Ascending aorta (tissue), 2 donors: ENCODE measurements at regions of chr21 and their contacts with region 1.

Region 1: GRCh38 chr21:45554477-45555175 is 12.4 kb upstream of the SLC19A1 start:
- DNase-seq: peak in 1 of 2 donors; percentile 89
- H3K4me3 ChIP-seq: peak overlapping the region; percentile 66 to 77
- H3K27ac ChIP-seq: peak overlapping the region; percentile 55 to 73
- H3K4me1 ChIP-seq: no peaks in the 10 kb centered on the region
- H3K27me3 ChIP-seq: no peaks in the 10 kb centered on the region
- CTCF ChIP-seq: peak; percentile 83 to 87 (median 84)

Region 2: DNA sequence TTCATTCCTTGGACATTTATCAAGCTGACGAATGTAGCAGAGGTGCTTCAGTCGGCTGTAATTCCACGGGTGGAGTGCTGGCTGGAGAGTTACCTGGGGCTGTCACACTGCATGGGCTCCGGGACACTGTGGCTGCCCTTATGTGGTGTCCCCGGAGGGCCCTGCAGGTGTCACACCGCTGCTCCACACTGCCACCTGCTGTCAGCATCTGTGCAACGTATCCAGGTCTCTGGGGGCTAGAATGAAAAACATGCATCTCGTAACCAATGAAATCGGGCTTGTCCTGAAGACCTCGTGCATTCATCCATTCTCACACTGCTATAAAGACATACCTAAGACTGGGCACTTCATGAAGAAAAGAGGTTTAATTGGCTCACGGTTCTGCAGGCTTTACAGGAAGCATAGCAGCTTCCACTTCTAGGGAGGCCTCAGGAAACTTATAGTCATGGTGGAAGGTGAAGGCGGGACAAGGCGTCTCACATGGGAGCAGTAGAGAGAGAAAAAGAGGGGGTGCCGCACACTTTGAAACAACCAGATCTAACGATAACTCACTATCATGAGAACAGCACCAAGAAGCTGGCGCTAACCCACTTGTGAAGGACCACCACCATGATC is 42.2 kb after region 1 on chr21:
- intact Hi-C with region 1: loop called (anchors 1 kb)
- DNase-seq: peak in 1 of 2 donors; percentile 76
- H3K4me3 ChIP-seq: no peak overlapping the region
- H3K27ac ChIP-seq: no peak overlapping the region
- H3K4me1 ChIP-seq: no peaks in the 10 kb centered on the region
- H3K27me3 ChIP-seq: no peaks in the 10 kb centered on the region
- CTCF ChIP-seq: peak; percentile 64 to 67 (median 66)

Region 3: DNA sequence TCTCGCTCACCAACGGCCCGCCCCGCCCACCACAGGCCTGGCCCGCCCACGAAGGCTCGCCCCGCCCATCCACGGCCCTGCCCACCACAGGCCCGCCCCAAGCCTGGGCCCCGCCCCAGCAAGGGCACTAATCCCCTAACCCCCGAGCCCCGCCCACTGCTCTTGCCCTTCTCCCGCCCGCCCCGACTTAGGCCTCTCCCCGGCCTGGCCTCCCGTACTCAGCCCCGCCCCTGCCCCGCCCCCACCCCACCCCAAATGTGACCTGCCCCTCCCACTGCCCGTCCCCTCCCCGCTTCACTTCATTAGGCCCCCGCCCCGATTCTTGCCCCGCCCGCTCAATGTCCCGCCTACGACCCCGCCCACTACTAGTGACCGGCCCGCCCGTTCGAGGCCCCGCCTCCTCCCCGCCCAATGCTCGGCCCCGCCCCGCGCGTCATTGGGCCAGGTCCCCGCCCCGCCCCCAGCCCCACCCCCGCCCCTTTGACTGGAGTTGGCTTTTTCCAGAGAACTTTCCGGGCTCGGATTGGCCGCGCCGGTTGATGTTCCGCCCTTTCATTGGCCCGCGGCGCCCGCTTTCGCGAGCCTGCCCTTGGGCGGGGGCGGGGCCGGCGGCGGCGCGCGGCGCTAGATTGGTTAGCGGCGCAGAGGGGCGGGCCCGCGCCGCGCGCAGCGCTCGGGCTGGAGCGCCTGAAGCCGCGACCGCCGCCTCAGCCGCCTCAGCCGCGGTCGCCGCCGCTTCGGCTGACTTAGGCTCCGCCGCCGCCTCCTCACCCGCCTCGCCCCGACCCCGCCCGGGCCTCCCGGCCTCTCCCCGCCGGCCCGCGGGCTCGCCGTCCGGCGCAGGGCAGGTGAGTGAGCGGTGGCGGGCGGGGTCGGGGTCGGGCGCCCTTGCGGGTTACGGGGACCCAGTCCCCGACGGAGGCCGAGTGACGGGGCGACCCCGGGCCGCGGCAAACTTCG is 88.7 kb after region 1 on chr21 and contains the start of gene PCBP3:
- intact Hi-C with region 1: loop called (anchors 5 kb)
- DNase-seq: peak; percentile 84 to 98
- H3K4me3 ChIP-seq: peak within 1 kb of the TSS; percentile 67
- H3K27ac ChIP-seq: peak within 1 kb of the TSS in 1 of 2 donors; percentile 49
- H3K4me1 ChIP-seq: peaks cover 2 to 3% of the 10 kb centered on the region in 2 donors
- H3K27me3 ChIP-seq: peaks cover 4% of the 10 kb centered on the region
- CTCF ChIP-seq: no peak
- total RNA-seq, gene PCBP3: not detected

Region 4: DNA sequence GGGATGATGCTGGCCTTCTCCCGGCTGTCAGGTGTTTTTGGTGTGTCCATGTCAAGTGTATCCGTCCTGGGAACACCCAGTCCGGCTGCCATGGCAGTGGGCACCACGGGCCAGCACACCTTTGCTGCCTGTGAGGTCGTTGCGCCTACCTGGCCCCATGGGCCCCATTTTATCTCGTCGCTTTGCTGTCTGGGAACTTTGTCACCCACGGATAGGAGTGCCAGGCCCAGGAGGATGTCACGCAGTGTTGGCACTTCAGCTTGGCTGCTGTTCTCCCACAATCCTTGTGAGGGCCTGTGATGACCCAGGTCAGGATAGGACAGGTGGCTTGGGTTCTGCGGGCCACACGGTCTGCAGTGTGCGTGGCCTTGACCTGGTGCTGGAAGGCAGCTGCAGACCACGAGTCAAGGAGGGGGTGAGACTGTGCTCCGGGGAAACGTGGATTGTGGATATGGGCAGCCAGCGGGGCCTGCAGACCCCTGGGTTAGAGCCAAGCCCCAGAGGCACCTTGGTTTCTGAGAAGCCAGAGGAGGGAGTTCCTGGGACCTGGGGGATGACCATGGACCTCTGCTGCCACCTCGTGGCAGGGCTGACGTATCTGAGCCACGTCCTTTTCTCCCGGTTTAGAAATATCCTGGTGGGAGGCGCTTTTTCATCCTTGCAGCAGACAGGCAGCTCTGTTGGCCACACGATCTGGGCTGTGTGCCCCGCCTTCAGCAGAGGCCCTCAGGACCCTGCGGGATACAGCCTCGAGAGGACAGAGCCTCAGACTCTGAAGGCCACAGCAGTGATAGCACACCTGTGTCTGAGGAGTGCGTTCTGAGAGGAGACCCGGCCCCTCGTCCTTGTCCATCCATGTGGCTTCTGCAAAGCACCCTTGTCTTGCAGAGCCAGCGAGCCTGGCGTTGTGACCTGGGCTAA is 265.8 kb after region 1 on chr21:
- intact Hi-C with region 1: loop called (anchors 1 kb)
- DNase-seq: peak in 1 of 2 donors; percentile 77
- H3K4me3 ChIP-seq: no peak overlapping the region
- H3K27ac ChIP-seq: no peak overlapping the region
- H3K4me1 ChIP-seq: no peaks in the 10 kb centered on the region
- H3K27me3 ChIP-seq: no peaks in the 10 kb centered on the region
- CTCF ChIP-seq: peak; percentile 73 to 82 (median 76)

Region 5: DNA sequence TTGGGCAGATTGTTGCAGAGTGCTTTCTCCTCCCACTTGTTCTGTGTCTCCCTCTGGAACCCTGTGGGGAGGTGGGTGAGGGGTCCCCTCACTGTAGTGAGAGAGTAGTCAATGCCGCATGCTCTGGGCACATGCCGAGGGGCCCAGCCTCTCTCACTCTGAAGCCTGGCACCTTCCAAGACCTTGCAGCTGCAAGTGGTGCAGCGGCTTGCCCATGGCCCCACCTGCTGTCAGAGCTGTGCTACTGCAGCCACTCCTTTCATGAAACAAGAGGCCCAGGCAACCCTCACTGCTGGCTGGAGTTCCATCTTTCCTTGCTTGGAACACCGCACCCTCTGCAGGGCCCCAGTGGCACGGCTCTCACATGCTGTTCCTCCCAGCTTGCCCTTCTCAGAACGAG is 368.5 kb after region 1 on chr21:
- intact Hi-C with region 1: loop called (anchors 5 kb)
- DNase-seq: peak in 1 of 2 donors; percentile 80
- H3K4me3 ChIP-seq: no peak overlapping the region
- H3K27ac ChIP-seq: no peak overlapping the region
- H3K4me1 ChIP-seq: peaks cover 0 to 3% of the 10 kb centered on the region in 2 donors
- H3K27me3 ChIP-seq: no peaks in the 10 kb centered on the region
- CTCF ChIP-seq: peak; percentile 76 to 97 (median 94)

Region 6: DNA sequence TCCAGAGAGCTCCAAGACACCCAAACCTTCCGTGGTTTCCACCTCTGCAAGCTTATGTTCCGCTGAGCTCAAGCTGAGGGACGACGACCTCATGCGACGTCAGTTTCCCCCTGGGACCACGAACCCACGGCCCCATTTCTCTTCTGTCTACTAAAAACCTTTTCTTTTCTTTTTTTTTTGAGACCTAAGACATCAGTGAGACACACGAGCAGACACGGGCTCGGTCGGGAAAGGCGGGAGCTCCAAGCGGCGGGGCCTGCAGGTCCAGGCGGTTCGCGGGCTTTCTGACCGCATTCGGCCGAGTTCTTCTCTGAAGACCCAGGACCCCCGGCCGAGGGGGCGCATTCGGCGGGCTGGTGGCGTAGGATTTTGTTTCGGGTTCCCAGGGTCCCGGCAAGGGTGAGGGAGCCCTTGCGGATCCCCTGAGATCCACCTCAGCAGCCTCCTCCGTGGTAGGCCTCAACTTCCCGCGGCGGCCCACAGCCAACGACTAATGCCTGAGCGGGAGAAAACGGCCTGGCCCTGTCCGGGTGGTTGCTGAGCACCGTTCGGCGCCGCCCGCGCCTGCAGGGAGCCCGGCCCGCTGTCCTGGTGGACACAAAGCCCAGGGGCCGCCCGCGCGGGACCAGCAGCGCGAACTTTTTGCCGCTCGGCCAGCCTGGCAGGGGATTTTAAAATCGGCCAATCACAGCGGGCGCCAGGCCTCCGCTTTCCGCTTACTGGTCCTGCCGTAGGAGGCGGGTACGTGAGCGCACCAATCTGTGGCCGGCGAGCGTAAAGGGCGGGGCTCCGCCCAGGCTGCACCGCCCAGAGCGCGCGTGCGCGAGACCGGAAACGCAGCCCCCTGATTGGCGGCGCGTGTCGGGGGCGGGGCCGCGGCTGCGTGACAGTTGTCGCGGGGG is 768.9 kb after region 1 on chr21 and contains the start of gene C21orf58:
- intact Hi-C with region 1: loop called (anchors 10 kb)
- DNase-seq: peak; percentile 92 to 99
- H3K4me3 ChIP-seq: peak within 1 kb of the TSS; percentile 81 to 98
- H3K27ac ChIP-seq: peak within 1 kb of the TSS; percentile 97
- H3K4me1 ChIP-seq: peaks cover 15 to 20% of the 10 kb centered on the region in 2 donors
- H3K27me3 ChIP-seq: no peaks in the 10 kb centered on the region
- CTCF ChIP-seq: peak in 1 of 3 experiments; percentile 4
- total RNA-seq, gene C21orf58: 3.2 TPM